Activated T-helper 2 cell treated with anti-CD3 and anti-CD28 coated beads, Interferon-gamma antibody, Interleukin-2, Interleukin-4, amounts not matched to agents 10 μg/mL and 5 μg/mL and 100 μg/mL, durations not matched to agents 14 hours and 24 hours and 36 hours (primary cell): ENCODE measurements at regions of chr2 and their contacts with region 1.

Region 1: GRCh38 chr2:191677646-191678436 is at the start of gene NABP1:
- DNase-seq: peak; percentile 97
- H3K4me3 Mint-ChIP-seq: peak within 1 kb of the TSS; percentile 84
- H3K27ac Mint-ChIP-seq: peak within 1 kb of the TSS; percentile 99
- H3K4me1 Mint-ChIP-seq: peaks cover 51% of the 10 kb centered on the region
- H3K27me3 Mint-ChIP-seq: no peaks in the 10 kb centered on the region
- total RNA-seq, gene NABP1: 39.9 and 40.0 TPM in 2 replicates

Region 2: GRCh38 chr2:191066197-191066918 is 611.5 kb before region 1 on chr2:
- intact Hi-C with region 1: loop called (anchors 5 kb)
- DNase-seq: no peak
- H3K4me3 Mint-ChIP-seq: peak overlapping the region; percentile 76
- H3K27ac Mint-ChIP-seq: peak overlapping the region; percentile 80
- H3K4me1 Mint-ChIP-seq: peaks cover 74% of the 10 kb centered on the region
- H3K27me3 Mint-ChIP-seq: no peaks in the 10 kb centered on the region

Region 3: GRCh38 chr2:191150600-191151330 is 527.1 kb before region 1 on chr2 and contains the start of gene STAT4:
- intact Hi-C with region 1: loop called (anchors 2 kb)
- DNase-seq: peak; percentile 76
- H3K4me3 Mint-ChIP-seq: peak within 1 kb of the TSS; percentile 95
- H3K27ac Mint-ChIP-seq: peak within 1 kb of the TSS; percentile 96
- H3K4me1 Mint-ChIP-seq: peaks cover 71% of the 10 kb centered on the region
- H3K27me3 Mint-ChIP-seq: no peaks in the 10 kb centered on the region
- total RNA-seq, gene STAT4: 92.2 and 96.9 TPM in 2 replicates

Region 4: DNA sequence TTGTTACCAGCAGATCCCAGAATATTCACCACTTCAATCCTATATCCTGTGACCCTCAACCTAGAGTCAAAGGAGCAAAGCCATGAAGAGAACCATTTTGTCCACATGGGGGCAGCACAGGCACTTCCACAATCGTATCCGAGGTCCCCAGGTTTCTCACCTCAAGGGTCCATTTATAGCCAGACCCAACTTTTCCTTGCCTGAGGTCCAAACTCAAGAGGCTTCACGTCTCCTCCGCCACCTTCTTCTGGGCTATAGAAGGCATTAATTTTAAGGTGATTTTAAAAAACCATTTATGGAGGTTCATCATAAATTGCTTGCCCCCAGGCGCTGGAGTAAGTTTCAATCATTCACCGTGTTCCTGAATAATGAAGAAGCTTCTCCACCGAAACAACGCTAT is 111.5 kb before region 1 on chr2:
- intact Hi-C with region 1: loop called (anchors 1 kb)
- DNase-seq: peak; percentile 39
- H3K4me3 Mint-ChIP-seq: no peak overlapping the region
- H3K27ac Mint-ChIP-seq: no peak overlapping the region
- H3K4me1 Mint-ChIP-seq: peaks cover 34% of the 10 kb centered on the region
- H3K27me3 Mint-ChIP-seq: peaks cover 57% of the 10 kb centered on the region

Region 5: GRCh38 chr2:191637182-191638078 is 40.4 kb before region 1 on chr2:
- intact Hi-C with region 1: loop called (anchors 1 kb)
- DNase-seq: peak; percentile 19
- H3K4me3 Mint-ChIP-seq: peak overlapping the region; percentile 66
- H3K27ac Mint-ChIP-seq: peak overlapping the region; percentile 81
- H3K4me1 Mint-ChIP-seq: peaks cover 54% of the 10 kb centered on the region
- H3K27me3 Mint-ChIP-seq: peaks cover 8% of the 10 kb centered on the region

Region 6: DNA sequence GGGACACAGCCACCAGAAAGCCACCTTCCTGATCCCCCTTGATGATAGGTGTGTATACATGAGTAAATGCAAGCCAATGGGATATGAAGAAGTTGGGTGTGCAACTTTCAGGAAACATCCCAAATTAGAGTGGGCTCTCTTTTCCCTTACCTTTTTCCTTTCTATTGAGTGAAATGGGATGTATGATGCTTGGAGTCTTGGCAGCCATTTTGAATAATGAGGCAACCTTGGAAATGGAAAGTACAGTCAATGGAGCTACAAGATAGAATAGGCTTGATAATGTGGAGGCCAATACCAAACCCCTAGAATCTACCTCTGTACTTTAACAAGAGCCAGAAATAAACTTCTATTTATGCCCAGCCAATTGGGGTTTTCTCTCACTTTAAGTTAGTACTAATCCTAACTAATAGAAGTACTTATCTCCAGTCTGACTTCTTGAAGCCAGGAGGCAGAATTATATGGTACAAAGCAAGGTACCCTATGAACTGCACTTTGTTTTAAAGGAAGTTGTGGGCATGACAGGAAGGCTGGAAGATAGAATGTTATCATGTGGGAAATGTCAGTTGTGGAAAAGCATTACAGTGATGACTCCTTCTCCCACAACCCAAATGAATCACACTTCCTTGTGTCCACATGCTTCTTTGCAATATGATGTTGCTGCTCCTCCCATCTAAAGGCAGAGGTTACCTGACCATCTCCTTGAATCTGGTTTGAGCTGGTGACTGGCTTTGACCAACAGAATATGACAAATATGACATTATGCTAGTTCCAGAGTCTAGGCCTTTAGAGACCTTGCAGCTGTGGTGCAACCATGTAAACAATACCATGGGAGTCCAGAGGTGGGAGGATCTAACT is 12.8 kb before region 1 on chr2:
- intact Hi-C with region 1: loop called (anchors 1 kb)
- DNase-seq: no peak
- H3K4me3 Mint-ChIP-seq: no peak overlapping the region
- H3K27ac Mint-ChIP-seq: no peak overlapping the region
- H3K4me1 Mint-ChIP-seq: peaks cover 33% of the 10 kb centered on the region
- H3K27me3 Mint-ChIP-seq: no peaks in the 10 kb centered on the region